T-cell (primary cell): ENCODE measurements at regions of chr1 and their contacts with region 1.

Region 1: GRCh38 chr1:19918057-19918456 is 5.4 kb downstream of the PLA2G2E start:
- DNase-seq: peak; percentile 37 to 88 (median 78)
- ATAC-seq: peak; percentile 60 to 77 (median 72)
- H3K4me3 ChIP-seq: no peak overlapping the region
- H3K4me3 Mint-ChIP-seq: no peak overlapping the region
- H3K27ac ChIP-seq: no peak overlapping the region
- H3K27ac Mint-ChIP-seq: no peak overlapping the region
- H3K4me1 ChIP-seq: no peaks in the 10 kb centered on the region
- H3K4me1 Mint-ChIP-seq: peaks cover 2 to 6% (median 3%) of the 10 kb centered on the region in 3 donors
- H3K27me3 ChIP-seq: peaks cover 0 to 11% of the 10 kb centered on the region in 2 experiments
- H3K27me3 Mint-ChIP-seq: peaks cover 0 to 5% of the 10 kb centered on the region in 2 donors

Region 2: GRCh38 chr1:19515201-19515600 is 402.9 kb before region 1 on chr1:
- CTCF ChIA-PET with region 1: no interaction called
- POLR2A ChIA-PET with region 1: interaction called in 1 of 2 experiments, 10 read pairs
- DNase-seq: no peak
- ATAC-seq: no peak
- H3K4me3 ChIP-seq: no peak overlapping the region
- H3K4me3 Mint-ChIP-seq: no peak overlapping the region
- H3K27ac ChIP-seq: no peak overlapping the region
- H3K27ac Mint-ChIP-seq: no peak overlapping the region
- H3K4me1 ChIP-seq: no peaks in the 10 kb centered on the region
- H3K4me1 Mint-ChIP-seq: peaks cover 7 to 13% (median 12%) of the 10 kb centered on the region in 3 donors
- H3K27me3 ChIP-seq: no peaks in the 10 kb centered on the region
- H3K27me3 Mint-ChIP-seq: no peaks in the 10 kb centered on the region

Region 3: DNA sequence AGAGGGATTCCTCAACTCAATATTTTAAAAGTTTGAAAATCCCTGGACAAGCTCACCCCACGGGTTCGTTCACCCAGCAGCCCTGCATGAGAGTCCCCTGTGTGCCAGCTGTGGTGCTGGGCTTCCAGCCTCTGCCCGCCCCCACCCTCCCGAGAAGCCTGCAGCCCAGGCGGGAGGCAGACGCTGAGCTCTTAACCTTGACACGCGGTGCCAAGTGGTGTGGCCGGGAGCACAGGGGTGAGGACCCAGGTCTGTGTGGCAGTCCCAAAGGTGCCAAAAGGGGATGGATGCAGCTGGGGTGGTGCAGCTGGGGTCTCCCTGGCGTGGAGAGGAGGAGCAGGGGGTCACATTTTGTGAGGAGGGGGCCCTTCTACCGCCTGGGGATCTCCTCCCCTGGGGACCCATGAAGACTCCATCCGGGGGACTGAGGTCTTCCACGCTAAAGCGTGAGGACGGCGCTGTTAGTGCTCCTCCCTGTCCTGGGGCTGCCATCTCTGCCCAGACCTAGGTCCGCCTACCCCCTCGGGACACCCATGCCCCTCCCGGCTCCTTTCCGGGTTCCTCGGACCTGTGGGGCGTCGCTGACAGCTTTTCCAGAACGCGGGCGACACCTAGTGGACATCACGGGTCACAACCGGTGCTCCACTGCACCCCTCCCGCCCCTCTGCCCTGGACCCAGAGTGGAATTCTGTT is 234.0 kb after region 1 on chr1:
- CTCF ChIA-PET with region 1: interaction called, 8 to 12 read pairs
- POLR2A ChIA-PET with region 1: interaction called in 1 of 2 experiments, 6 read pairs
- DNase-seq: peak; percentile 36 to 85 (median 69)
- ATAC-seq: peak; percentile 81 to 95 (median 90)
- H3K4me3 ChIP-seq: peak overlapping the region; percentile 52 to 58
- H3K4me3 Mint-ChIP-seq: peak overlapping the region; percentile 69 to 82 (median 78)
- H3K27ac ChIP-seq: no peak overlapping the region
- H3K27ac Mint-ChIP-seq: peak overlapping the region in 1 of 2 donors; percentile 31
- H3K4me1 ChIP-seq: peaks cover 0 to 17% of the 10 kb centered on the region in 2 experiments
- H3K4me1 Mint-ChIP-seq: peaks cover 14 to 21% (median 17%) of the 10 kb centered on the region in 3 donors
- H3K27me3 ChIP-seq: peaks cover 0 to 29% of the 10 kb centered on the region in 2 experiments
- H3K27me3 Mint-ChIP-seq: no peaks in the 10 kb centered on the region